ENCODE measurements at regions of chr9 and their contacts with region 1.

Region 1: DNA sequence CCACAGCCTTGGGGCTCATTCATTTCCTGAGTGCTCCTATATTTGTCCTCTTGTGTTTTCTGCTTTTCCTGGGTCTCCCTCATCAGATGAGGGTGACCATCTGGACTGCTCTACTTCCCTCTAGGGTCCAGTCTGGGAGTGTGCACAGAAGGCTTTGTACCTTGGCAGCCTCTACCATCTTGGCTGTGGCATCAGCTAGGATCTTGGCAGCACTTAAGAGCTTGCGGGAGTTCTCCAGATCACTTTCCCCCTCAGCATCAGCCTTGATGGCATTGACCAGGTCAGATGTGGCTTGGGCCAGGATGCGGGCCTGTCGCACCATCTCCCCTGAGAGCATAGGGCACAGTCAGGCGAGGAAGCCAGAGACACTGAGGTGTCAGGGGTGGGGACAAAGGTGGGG is 15.8 kb downstream of the TLN1 start:
- DNase-seq: peak; percentile 34
- H3K4me3 ChIP-seq: no peak overlapping the region
- H3K27ac ChIP-seq: peak overlapping the region; percentile 8
- H3K4me1 ChIP-seq: no peaks in the 10 kb centered on the region
- H3K27me3 ChIP-seq: no peaks in the 10 kb centered on the region

Region 2: DNA sequence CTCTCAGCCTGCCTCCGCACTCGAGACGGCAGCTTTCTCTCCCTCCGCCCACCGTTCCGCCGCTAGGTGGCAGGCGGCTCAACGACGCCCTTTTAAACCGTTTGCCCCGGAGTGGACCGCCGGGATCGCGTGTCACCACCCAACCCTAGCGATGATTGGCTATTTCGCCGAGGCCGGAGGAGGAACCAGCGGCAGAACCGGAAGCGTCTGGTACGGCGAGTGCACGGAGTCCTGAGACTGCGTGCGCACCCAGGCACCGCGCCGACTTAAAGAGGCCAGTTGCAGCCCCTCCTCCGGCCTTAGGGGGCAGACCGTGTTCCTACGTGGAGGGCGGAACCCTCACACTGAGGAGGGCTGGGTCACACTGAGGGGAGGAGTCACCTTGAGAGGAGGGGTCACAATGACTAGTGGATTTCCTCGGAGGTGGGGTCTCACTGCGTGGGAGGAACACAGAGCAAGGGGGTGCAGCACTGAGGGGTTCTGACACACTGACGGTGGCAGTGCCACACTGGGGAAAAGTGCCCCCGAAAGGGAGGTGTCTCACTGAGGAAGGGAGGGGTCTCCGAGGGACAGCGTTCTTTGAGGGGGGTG is 112.1 kb before region 1 on chr9:
- in situ Hi-C with region 1: loop called (anchors 25 kb)
- DNase-seq: peak; percentile 100
- H3K4me3 ChIP-seq: peak overlapping the region; percentile 75
- H3K27ac ChIP-seq: peak overlapping the region; percentile 97
- H3K4me1 ChIP-seq: peaks cover 15% of the 10 kb centered on the region
- H3K27me3 ChIP-seq: no peaks in the 10 kb centered on the region

Region 3: DNA sequence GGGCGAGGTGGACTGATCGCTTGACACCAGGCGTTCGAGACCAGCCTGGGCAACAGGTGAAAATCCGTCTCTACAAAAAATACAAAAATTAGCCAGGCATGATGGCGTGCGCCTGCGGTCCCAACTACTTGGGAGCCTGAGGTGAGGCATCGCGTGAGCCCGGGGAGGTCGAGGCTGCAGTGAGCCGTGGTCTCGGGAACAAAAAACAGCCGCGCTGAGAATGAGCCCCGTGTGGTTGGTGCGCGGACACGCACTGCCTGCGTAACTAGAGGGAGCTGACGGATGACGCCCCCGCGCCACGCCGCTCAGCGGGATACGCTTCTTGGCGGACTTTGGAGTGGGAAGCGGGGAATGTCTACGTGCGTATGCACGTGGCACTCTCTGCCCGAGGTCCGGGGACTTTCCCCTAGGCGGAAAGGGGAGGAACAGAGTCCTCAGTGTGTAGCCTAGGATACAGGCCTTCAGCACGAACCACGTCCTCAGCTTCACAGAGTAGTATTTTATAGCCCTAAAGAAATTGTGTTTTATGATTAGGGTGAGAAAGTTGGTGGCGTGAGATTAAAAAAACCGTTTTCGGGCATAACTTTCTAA is 58.6 kb before region 1 on chr9 and contains the start of gene RMRP:
- in situ Hi-C with region 1: no loop called
- DNase-seq: peak; percentile 100
- H3K4me3 ChIP-seq: peak within 1 kb of the TSS; percentile 90
- H3K27ac ChIP-seq: peak within 1 kb of the TSS; percentile 98
- H3K4me1 ChIP-seq: peaks cover 23% of the 10 kb centered on the region
- H3K27me3 ChIP-seq: no peaks in the 10 kb centered on the region
- total RNA-seq, gene RMRP: 14,230 and 20,944 TPM in 2 replicates

Measured in GM23248 (cell line).